PC-3 (cell line): ENCODE measurements at regions of chr10 and their contacts with region 1.

Region 1: GRCh38 chr10:56035489-56035888 is 325.6 kb downstream of the ZWINT start:
- DNase-seq: no peak
- ATAC-seq: no peak
- H3K4me3 ChIP-seq: no peak overlapping the region
- H3K27ac ChIP-seq: no peak overlapping the region
- H3K4me1 ChIP-seq: no peaks in the 10 kb centered on the region
- H3K27me3 ChIP-seq: no peaks in the 10 kb centered on the region
- CTCF ChIP-seq: no peak

Region 2: DNA sequence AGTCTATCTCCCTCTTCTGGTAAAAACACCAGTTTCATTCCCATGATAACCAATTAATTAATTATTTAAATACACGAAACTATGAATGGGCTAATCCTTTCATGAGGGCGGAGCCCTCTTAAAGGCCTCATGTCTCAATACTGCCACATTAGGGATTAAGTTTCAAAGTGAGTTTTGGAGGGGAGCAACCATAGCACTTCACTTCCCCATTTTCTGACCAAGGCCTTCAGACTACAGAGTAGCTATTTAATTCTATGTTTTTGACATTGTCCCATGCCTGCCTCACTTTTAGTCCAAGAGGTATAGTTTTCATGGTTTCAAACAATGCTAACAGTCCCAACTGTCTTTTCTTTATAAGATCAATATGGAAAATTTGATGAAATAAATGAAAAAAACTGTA is 293.0 kb before region 1 on chr10:
- CTCF ChIA-PET with region 1: no interaction called
- POLR2A ChIA-PET with region 1: no interaction called
- intact Hi-C with region 1: loop called (anchors 5 kb)
- DNase-seq: no peak
- ATAC-seq: no peak
- H3K4me3 ChIP-seq: no peak overlapping the region
- H3K27ac ChIP-seq: no peak overlapping the region
- H3K4me1 ChIP-seq: peaks cover 10% of the 10 kb centered on the region; the same call in 1 of the 2 replicates
- H3K27me3 ChIP-seq: no peaks in the 10 kb centered on the region
- CTCF ChIP-seq: no peak

Region 3: DNA sequence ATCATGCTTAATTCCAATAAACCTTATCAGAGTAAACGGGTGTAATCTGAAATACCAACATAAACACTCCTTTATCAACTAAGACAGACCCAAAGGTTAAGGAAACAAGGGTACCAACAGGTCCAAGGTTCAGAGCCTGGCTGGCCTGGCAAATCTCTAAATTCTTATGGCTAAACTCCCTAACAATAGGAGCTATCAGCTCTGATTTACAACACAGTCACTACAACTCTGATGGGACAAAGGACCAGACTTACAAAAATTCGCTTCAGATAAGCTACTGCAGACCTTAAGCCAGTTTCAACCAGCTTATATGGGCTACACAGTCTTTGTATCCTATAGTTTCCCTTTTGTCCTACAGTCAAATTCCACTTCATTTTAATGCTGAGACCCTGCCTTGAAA is 56.3 kb before region 1 on chr10:
- CTCF ChIA-PET with region 1: no interaction called
- POLR2A ChIA-PET with region 1: no interaction called
- intact Hi-C with region 1: no loop called
- DNase-seq: no peak
- ATAC-seq: no peak
- H3K4me3 ChIP-seq: no peak overlapping the region
- H3K27ac ChIP-seq: no peak overlapping the region
- H3K4me1 ChIP-seq: no peaks in the 10 kb centered on the region
- H3K27me3 ChIP-seq: no peaks in the 10 kb centered on the region
- CTCF ChIP-seq: no peak

Region 4: GRCh38 chr10:56095506-56096225 is 60.2 kb after region 1 on chr10:
- CTCF ChIA-PET with region 1: no interaction called
- POLR2A ChIA-PET with region 1: no interaction called
- intact Hi-C with region 1: no loop called
- DNase-seq: no peak
- ATAC-seq: no peak; the same call in 1 of the 2 replicates
- H3K4me3 ChIP-seq: no peak overlapping the region
- H3K27ac ChIP-seq: no peak overlapping the region
- H3K4me1 ChIP-seq: no peaks in the 10 kb centered on the region
- H3K27me3 ChIP-seq: no peaks in the 10 kb centered on the region
- CTCF ChIP-seq: no peak